ENCODE measurements at regions of chr15 and their contacts with region 1.

Region 1: DNA sequence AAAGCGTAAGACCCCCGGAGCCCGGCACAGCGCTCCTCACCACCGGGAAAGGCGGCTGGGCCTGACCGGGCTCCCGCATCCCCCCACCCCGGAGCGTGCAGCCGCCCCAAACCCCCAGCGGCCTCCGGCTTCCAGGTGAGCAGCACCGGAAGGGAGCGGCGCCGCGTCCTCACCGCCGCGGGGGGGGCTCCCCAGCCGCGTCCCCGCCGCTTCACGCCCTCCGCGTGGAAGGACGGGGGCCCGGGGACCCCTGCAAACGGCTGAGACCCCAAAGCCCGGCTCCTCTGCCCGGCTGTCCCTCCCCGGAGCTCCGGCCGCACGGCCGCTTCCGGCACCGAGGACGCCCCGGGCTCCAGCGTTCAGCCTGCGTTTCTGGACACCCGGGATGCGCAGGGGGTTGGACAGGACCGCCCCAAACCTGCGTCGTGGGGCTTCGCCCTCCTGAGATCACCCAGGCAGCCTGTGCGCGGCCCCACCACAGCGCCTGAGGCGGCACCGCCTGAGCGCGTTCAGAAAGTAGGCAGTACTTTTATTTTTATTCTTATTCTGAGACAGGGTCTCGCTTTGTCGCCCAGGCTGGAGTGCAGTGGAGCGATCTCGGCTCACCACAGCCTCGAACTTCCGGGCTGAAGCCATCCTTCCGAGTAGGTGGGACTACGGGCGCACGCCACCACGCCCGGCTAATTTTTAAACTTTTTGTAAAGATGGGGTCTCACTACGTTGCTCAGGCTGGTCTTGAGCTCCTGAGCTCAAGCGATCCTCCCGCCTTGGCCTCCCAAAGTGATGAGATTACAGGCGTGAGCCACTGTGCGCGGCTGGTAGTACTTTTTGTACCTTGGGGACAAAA is 51.6 kb upstream of the BLM start:
- DNase-seq: peak; percentile 74
- ATAC-seq: peak; percentile 83
- H3K4me3 ChIP-seq: peak overlapping the region; percentile 82
- H3K27ac ChIP-seq: peak overlapping the region; percentile 100
- H3K4me1 ChIP-seq: peaks cover 53% of the 10 kb centered on the region
- H3K27me3 ChIP-seq: no peaks in the 10 kb centered on the region
- CTCF ChIP-seq: no peak
- EP300 ChIP-seq: peak; percentile 24 to 51; a peak in 1 of 4 replicates
- POLR2A ChIP-seq: peak; percentile 78
- RAD21 ChIP-seq: peak; percentile 25; the same call in 1 of the 2 replicates

Region 2: GRCh38 chr15:90618330-90619125 is 47.0 kb before region 1 on chr15:
- CTCF ChIA-PET with region 1: no interaction called
- POLR2A ChIA-PET with region 1: no interaction called
- RAD21 ChIA-PET with region 1: no interaction called
- SMC1A ChIA-PET with region 1: no interaction called
- in situ Hi-C with region 1: no loop called
- intact Hi-C with region 1: no loop called
- DNase-seq: no peak
- ATAC-seq: no peak
- H3K4me3 ChIP-seq: no peak overlapping the region
- H3K27ac ChIP-seq: no peak overlapping the region
- H3K4me1 ChIP-seq: peaks cover 15% of the 10 kb centered on the region
- H3K27me3 ChIP-seq: no peaks in the 10 kb centered on the region
- CTCF ChIP-seq: no peak
- EP300 ChIP-seq: no peak
- POLR2A ChIP-seq: no peak
- RAD21 ChIP-seq: no peak

Region 3: DNA sequence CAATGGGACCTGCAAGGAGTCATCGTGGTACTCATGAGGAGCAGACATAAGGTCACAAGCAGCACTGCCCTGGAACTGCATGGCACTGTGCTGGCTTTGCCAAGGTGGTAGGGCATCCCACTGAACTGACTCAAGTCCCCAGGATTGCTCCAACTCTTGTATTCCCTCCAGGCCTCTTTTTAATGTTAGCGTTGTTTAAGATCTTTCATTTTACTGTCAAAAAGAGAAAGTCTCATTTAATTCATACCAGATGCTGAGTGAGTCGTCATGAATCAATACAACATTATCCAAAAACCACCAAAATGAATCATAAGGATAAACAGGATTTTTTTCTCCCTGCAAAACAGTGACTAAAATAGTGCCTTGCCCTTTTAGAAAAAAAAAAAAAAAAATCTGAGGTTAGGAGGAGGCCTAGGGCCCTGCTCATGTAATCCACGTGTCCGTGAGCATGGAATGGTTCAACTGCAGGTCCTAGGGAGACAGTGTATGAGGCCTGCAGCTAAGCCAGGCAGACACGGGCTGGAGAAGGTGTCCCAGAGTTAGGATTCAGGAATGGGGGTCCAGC is 14.9 kb after region 1 on chr15:
- CTCF ChIA-PET with region 1: interaction called, 22 read pairs
- POLR2A ChIA-PET with region 1: interaction called, 75 read pairs
- RAD21 ChIA-PET with region 1: interaction called, 52 read pairs
- SMC1A ChIA-PET with region 1: interaction called, 112 read pairs
- in situ Hi-C with region 1: no loop called
- intact Hi-C with region 1: no loop called
- DNase-seq: no peak
- ATAC-seq: no peak
- H3K4me3 ChIP-seq: no peak overlapping the region
- H3K27ac ChIP-seq: no peak overlapping the region
- H3K4me1 ChIP-seq: peaks cover 30% of the 10 kb centered on the region
- H3K27me3 ChIP-seq: no peaks in the 10 kb centered on the region
- CTCF ChIP-seq: no peak
- EP300 ChIP-seq: no peak
- POLR2A ChIP-seq: no peak
- RAD21 ChIP-seq: no peak

Region 4: DNA sequence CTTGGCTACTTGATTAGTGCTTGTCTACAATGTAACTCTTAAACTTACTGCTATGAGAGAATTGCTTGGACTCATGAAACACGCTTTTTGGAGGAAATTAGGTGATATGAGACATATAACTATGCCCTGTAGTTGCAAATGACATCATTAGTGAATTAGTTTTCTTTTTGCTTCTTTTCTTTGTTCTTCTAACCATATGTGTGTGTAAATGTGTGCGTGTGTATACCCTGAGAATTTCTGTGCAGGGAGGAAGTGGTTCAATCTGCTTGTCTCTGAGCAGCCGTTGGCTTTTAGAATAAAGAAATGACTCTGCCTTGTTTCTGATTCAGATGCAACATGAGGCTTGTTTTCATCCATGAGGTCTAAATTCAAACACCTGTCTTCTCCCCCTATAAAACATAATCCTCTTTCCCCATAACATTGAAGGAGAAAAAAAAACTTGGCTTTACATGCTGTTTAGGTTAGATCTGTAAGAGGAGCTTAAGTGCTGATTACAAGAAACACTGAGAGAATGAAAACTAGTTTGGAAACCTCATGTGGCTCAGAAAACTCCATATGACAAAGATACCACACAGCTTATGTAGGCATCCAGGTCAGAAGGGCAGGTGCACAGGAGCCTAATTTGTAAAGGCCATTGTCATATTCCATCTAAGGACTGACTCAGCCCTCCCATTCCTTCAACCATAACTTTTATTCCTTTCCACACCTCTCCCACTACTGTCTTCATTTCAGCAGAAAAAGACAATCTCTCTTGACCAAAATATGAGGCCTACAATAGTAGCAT is 21.1 kb after region 1 on chr15:
- CTCF ChIA-PET with region 1: interaction called, 22 read pairs
- POLR2A ChIA-PET with region 1: interaction called, 75 read pairs
- RAD21 ChIA-PET with region 1: interaction called, 52 read pairs
- SMC1A ChIA-PET with region 1: interaction called, 112 read pairs
- in situ Hi-C with region 1: no loop called
- intact Hi-C with region 1: loop called (anchors 1 kb)
- DNase-seq: peak; percentile 92
- ATAC-seq: peak; percentile 85
- H3K4me3 ChIP-seq: no peak overlapping the region
- H3K27ac ChIP-seq: peak overlapping the region; percentile 99
- H3K4me1 ChIP-seq: peaks cover 53% of the 10 kb centered on the region
- H3K27me3 ChIP-seq: no peaks in the 10 kb centered on the region
- CTCF ChIP-seq: no peak
- EP300 ChIP-seq: peak; percentile 91 to 93
- POLR2A ChIP-seq: no peak
- RAD21 ChIP-seq: no peak; the same call in 1 of the 2 replicates

Region 5: DNA sequence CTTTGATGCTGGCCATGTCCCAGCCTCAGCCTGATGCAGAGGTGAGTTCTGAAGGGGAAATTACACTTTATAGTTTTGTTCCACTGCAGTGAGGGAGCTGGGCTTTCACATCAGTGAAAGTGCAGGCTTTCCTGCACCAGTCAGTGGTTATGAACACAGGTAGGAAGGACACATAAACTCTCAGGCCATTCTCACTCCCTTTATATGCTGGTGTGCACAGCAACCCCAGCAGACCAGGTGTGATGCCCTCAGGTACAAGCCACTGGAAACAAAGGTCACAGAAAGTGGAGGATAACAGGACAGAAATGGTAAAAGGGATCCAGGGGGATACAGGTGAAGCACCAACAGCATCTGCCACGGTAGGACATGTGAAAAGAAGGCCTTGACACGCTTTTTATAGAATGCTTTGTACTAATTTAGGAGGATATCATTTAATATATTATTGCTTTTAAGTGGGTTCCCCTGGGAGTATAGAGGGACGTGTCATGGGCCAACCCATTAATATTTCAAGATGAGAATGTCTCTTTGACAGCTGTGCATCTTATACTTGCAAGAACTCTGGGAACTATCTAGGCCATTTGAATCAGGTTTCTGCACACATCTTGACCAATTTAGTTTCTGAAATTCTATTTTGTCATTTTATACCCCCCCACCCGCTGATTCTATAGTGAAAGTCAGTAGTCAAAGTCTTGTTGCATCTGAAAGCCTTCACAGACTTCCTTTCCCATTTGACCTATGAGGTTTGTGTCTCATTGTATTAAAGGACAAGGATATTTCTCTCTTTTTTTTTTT is 26.7 kb after region 1 on chr15:
- CTCF ChIA-PET with region 1: interaction called, 22 read pairs
- POLR2A ChIA-PET with region 1: interaction called, 75 read pairs
- RAD21 ChIA-PET with region 1: interaction called, 52 read pairs
- SMC1A ChIA-PET with region 1: interaction called, 112 read pairs
- in situ Hi-C with region 1: no loop called
- intact Hi-C with region 1: loop called (anchors 1 kb)
- DNase-seq: peak; percentile 84
- ATAC-seq: peak; percentile 73
- H3K4me3 ChIP-seq: no peak overlapping the region
- H3K27ac ChIP-seq: peak overlapping the region; percentile 99
- H3K4me1 ChIP-seq: peaks cover 41% of the 10 kb centered on the region
- H3K27me3 ChIP-seq: no peaks in the 10 kb centered on the region
- CTCF ChIP-seq: no peak
- EP300 ChIP-seq: no peak
- POLR2A ChIP-seq: peak; percentile 68
- RAD21 ChIP-seq: peak; percentile 19; the same call in 1 of the 2 replicates